MCF 10A (cell line): ENCODE measurements at regions of chr2 and their contacts with region 1.

Region 1: DNA sequence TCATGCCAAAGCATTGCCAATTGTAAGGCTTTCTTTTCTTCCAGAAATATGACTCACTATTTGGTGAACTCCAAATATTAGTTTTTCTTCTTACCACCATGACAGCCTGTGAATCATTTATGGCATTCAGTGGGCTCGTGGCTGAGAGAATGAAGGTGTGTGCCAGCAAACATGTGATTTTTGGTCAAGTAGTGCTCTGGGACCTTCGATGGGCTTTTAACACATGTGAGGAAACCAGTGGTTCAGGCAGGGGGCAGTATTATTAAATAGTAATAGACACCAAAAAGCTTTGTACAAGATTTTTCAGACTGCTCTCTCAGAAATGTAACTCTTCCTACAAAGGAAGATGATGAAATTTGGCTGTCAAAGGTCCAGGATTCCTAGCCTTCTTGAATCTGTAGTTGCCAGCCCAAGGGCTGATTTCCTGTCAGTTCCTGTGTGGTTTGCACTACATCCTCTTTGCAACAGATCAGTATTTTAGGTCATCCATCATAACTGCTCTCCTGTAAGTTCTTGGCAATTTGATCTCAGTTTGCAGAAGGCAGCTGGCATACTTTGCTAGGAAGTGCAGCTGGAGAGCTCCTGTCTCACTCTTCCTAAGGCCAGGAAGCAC is 64.3 kb downstream of the BABAM2 start:
- DNase-seq: peak; percentile 98
- H3K4me3 Mint-ChIP-seq: peak overlapping the region; percentile 2
- H3K27ac Mint-ChIP-seq: peak overlapping the region; percentile 93
- H3K4me1 Mint-ChIP-seq: peaks cover 58% of the 10 kb centered on the region
- H3K27me3 Mint-ChIP-seq: no peaks in the 10 kb centered on the region
- CTCF ChIP-seq: peak; percentile 29

Region 2: DNA sequence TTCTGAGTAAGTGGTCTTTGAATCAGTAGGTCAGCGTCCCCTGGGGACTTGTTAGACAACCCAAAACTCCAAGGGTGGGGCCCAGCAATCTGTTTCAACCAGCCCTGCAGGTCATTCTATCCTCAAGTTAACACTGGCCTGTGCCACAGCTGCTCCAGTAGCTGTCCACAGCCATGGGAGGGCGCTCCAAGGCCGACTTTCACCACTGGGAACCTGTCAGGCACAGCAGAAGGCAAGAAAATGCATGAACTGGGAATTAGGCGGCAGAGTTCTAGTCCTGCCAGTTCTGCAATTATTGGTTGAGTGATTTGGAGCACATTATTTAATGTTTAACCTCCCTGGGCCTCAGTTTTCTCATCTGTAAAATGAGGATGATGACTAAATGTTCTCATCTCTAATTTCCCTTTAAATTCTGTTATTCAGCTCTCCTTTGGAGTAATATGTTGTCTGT is 200.7 kb before region 1 on chr2:
- CTCF ChIA-PET with region 1: no interaction called
- POLR2A ChIA-PET with region 1: no interaction called
- intact Hi-C with region 1: loop called (anchors 1 kb)
- DNase-seq: peak; percentile 82
- H3K4me3 Mint-ChIP-seq: peak overlapping the region; percentile 31
- H3K27ac Mint-ChIP-seq: no peak overlapping the region
- H3K4me1 Mint-ChIP-seq: peaks cover 42% of the 10 kb centered on the region
- H3K27me3 Mint-ChIP-seq: no peaks in the 10 kb centered on the region
- CTCF ChIP-seq: peak; percentile 95

Region 3: GRCh38 chr2:27771548-27772335 is 183.1 kb before region 1 on chr2 and contains the start of gene MRPL33:
- CTCF ChIA-PET with region 1: no interaction called
- POLR2A ChIA-PET with region 1: interaction called, 5 read pairs
- intact Hi-C with region 1: loop called (anchors 2 kb)
- DNase-seq: peak; percentile 88
- H3K4me3 Mint-ChIP-seq: peak within 1 kb of the TSS; percentile 98
- H3K27ac Mint-ChIP-seq: peak within 1 kb of the TSS; percentile 95
- H3K4me1 Mint-ChIP-seq: peaks cover 40% of the 10 kb centered on the region
- H3K27me3 Mint-ChIP-seq: no peaks in the 10 kb centered on the region
- CTCF ChIP-seq: no peak
- total RNA-seq, gene MRPL33: 204 and 233 TPM in 2 replicates

Region 4: GRCh38 chr2:27798948-27799645 is 155.8 kb before region 1 on chr2:
- CTCF ChIA-PET with region 1: no interaction called
- POLR2A ChIA-PET with region 1: no interaction called
- intact Hi-C with region 1: loop called (anchors 1 kb)
- DNase-seq: peak; percentile 98
- H3K4me3 Mint-ChIP-seq: no peak overlapping the region
- H3K27ac Mint-ChIP-seq: peak overlapping the region; percentile 68
- H3K4me1 Mint-ChIP-seq: peaks cover 59% of the 10 kb centered on the region
- H3K27me3 Mint-ChIP-seq: no peaks in the 10 kb centered on the region
- CTCF ChIP-seq: no peak

Region 5: GRCh38 chr2:28084564-28084963 is 129.7 kb after region 1 on chr2:
- CTCF ChIA-PET with region 1: no interaction called
- POLR2A ChIA-PET with region 1: no interaction called
- intact Hi-C with region 1: no loop called
- DNase-seq: peak; percentile 51
- H3K4me3 Mint-ChIP-seq: no peak overlapping the region
- H3K27ac Mint-ChIP-seq: no peak overlapping the region
- H3K4me1 Mint-ChIP-seq: peaks cover 20% of the 10 kb centered on the region
- H3K27me3 Mint-ChIP-seq: no peaks in the 10 kb centered on the region
- CTCF ChIP-seq: no peak

Region 6: GRCh38 chr2:28175028-28175427 is 220.2 kb after region 1 on chr2:
- CTCF ChIA-PET with region 1: no interaction called
- POLR2A ChIA-PET with region 1: interaction called, 3 read pairs
- intact Hi-C with region 1: loop called (anchors 10 kb)
- DNase-seq: no peak
- H3K4me3 Mint-ChIP-seq: no peak overlapping the region
- H3K27ac Mint-ChIP-seq: no peak overlapping the region
- H3K4me1 Mint-ChIP-seq: peaks cover 17% of the 10 kb centered on the region
- H3K27me3 Mint-ChIP-seq: no peaks in the 10 kb centered on the region
- CTCF ChIP-seq: no peak

Region 7: DNA sequence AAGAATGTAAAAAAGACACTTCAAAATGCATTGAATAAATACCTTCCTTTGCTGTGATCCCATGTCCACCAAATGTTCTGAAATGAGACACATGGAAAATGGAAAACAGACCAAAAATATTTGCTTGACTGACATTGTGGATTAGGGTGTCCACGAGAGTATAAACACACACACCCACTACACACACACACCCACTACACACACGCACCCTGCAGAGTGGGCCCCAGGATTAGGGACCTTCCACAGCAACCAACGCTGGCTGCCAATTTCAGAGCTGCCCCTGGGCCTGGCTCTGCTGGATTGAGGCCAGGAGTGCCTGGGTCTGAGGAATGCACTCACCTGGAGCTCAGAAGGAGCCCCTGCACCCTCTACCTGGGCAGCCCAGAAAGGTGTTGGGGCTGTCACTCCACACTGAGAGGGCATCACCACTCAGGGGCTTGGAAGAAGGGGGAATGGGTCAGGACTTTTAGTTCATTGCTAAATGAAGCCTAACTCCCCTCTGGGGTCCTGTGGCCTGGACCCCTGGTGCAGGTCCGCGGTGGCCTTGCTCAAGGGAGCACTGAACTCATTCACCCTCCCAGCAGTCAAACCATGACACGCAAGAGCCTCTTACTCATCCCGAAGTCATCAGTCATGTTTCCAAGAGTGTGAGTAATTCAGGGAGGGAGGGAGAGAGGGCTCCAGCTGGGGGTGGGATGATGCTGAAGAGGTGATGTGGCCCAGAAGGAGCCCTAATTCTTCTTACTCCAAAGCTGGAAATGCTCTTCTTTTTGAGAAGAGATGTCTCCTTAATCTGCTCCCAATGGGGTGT is 490.8 kb after region 1 on chr2:
- CTCF ChIA-PET with region 1: interaction called, 4 read pairs
- POLR2A ChIA-PET with region 1: no interaction called
- intact Hi-C with region 1: loop called (anchors 5 kb)
- DNase-seq: peak; percentile 99
- H3K4me3 Mint-ChIP-seq: peak overlapping the region; percentile 20
- H3K27ac Mint-ChIP-seq: peak overlapping the region; percentile 11
- H3K4me1 Mint-ChIP-seq: peaks cover 54% of the 10 kb centered on the region
- H3K27me3 Mint-ChIP-seq: no peaks in the 10 kb centered on the region
- CTCF ChIP-seq: no peak